Activated T-helper 2 cell treated with anti-CD3 and anti-CD28 coated beads, Interferon-gamma antibody, Interleukin-2, Interleukin-4, amounts not matched to agents 10 μg/mL and 5 μg/mL and 100 μg/mL, durations not matched to agents 14 hours and 24 hours and 36 hours (primary cell): ENCODE measurements at regions of chr2 and their contacts with region 1.

Region 1: GRCh38 chr2:112821142-112821541 is 15.4 kb downstream of the IL1B start:
- DNase-seq: peak; percentile 18
- H3K4me3 Mint-ChIP-seq: no peak overlapping the region
- H3K27ac Mint-ChIP-seq: peak overlapping the region; percentile 78
- H3K4me1 Mint-ChIP-seq: peaks cover 41% of the 10 kb centered on the region
- H3K27me3 Mint-ChIP-seq: no peaks in the 10 kb centered on the region

Region 2: GRCh38 chr2:112645310-112646101 is 175.6 kb before region 1 on chr2 and contains the start of gene SLC20A1:
- intact Hi-C with region 1: loop called (anchors 10 kb)
- DNase-seq: peak; percentile 98
- H3K4me3 Mint-ChIP-seq: peak within 1 kb of the TSS; percentile 97
- H3K27ac Mint-ChIP-seq: peak within 1 kb of the TSS; percentile 77
- H3K4me1 Mint-ChIP-seq: peaks cover 68% of the 10 kb centered on the region
- H3K27me3 Mint-ChIP-seq: no peaks in the 10 kb centered on the region
- total RNA-seq, gene SLC20A1: 128 TPM in 2 replicates

Region 3: GRCh38 chr2:112772322-112772721 is 48.8 kb before region 1 on chr2:
- intact Hi-C with region 1: loop called (anchors 10 kb)
- DNase-seq: no peak
- H3K4me3 Mint-ChIP-seq: no peak overlapping the region
- H3K27ac Mint-ChIP-seq: no peak overlapping the region
- H3K4me1 Mint-ChIP-seq: peaks cover 29% of the 10 kb centered on the region
- H3K27me3 Mint-ChIP-seq: peaks cover 25% of the 10 kb centered on the region

Region 4: DNA sequence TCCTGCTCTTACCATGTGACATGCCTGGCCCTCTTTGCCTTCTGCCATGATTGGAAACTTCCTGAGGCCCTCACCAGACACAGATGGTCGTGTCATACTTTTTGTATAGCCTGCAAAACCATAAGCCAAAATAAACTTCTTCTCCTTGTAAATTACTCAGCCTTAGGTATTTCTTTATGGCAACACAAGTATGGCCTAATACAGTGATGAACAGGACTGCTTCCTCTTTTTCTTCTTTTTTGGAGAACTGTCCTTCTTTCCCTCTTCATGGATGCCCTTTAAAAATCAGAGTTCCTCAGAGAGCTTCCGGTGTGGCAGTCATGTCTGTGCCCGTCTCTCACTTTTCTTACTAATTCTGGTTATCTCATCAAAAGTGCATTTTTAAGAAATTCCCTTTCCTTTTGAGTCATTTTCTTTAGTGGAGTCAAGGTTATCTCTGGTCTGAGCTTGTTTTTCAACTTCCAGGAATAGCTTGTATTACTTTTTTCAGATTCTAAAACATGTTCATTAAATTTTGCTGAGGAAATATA is 27.6 kb before region 1 on chr2:
- intact Hi-C with region 1: loop called (anchors 1 kb)
- DNase-seq: no peak
- H3K4me3 Mint-ChIP-seq: no peak overlapping the region
- H3K27ac Mint-ChIP-seq: peak overlapping the region; percentile 34
- H3K4me1 Mint-ChIP-seq: peaks cover 22% of the 10 kb centered on the region
- H3K27me3 Mint-ChIP-seq: no peaks in the 10 kb centered on the region

Region 5: GRCh38 chr2:112803691-112804521 is 17.2 kb before region 1 on chr2:
- intact Hi-C with region 1: loop called (anchors 1 kb)
- DNase-seq: no peak
- H3K4me3 Mint-ChIP-seq: no peak overlapping the region
- H3K27ac Mint-ChIP-seq: peak overlapping the region; percentile 84
- H3K4me1 Mint-ChIP-seq: peaks cover 29% of the 10 kb centered on the region
- H3K27me3 Mint-ChIP-seq: no peaks in the 10 kb centered on the region

Region 6: GRCh38 chr2:112884869-112885505 is 63.8 kb after region 1 on chr2:
- intact Hi-C with region 1: loop called (anchors 1 kb)
- DNase-seq: peak; percentile 61
- H3K4me3 Mint-ChIP-seq: no peak overlapping the region
- H3K27ac Mint-ChIP-seq: peak overlapping the region; percentile 30
- H3K4me1 Mint-ChIP-seq: peaks cover 34% of the 10 kb centered on the region
- H3K27me3 Mint-ChIP-seq: no peaks in the 10 kb centered on the region

Region 7: DNA sequence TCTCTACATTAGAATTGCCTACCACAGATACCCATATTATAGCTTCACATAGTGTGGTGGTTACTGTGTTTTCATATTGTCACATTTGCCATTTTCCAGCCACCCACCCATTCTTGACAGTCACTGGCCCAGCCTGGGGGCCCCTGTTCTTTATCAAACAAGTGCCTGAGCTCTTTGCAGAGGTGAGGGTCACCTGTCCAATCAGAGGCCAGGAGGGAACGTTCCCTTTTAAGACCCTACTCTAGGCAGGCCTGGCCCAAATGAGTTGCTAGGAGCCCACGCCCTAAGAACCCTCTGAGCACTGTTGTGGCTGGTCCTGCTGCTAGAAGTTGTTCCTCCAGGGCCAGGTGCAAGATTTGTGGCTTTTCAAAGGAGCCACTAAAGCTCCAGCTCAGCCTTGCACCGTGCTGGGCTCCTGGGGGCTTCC is 95.0 kb after region 1 on chr2:
- intact Hi-C with region 1: loop called (anchors 2 kb)
- DNase-seq: no peak
- H3K4me3 Mint-ChIP-seq: no peak overlapping the region
- H3K27ac Mint-ChIP-seq: peak overlapping the region; percentile 63
- H3K4me1 Mint-ChIP-seq: peaks cover 26% of the 10 kb centered on the region
- H3K27me3 Mint-ChIP-seq: peaks cover 4% of the 10 kb centered on the region